CD4-positive, alpha-beta T cell (primary cell): ENCODE measurements at regions of chr2 and their contacts with region 1.

Region 1: GRCh38 chr2:105521205-105521604 is 122.4 kb upstream of the FHL2 start:
- DNase-seq: peak in 3 of 14 experiments; percentile 20 to 55 (median 47)
- ATAC-seq: no peak
- H3K4me3 ChIP-seq: no peak overlapping the region
- H3K4me3 Mint-ChIP-seq: no peak overlapping the region
- H3K27ac ChIP-seq: no peak overlapping the region
- H3K27ac Mint-ChIP-seq: no peak overlapping the region
- H3K4me1 ChIP-seq: no peaks in the 10 kb centered on the region
- H3K4me1 Mint-ChIP-seq: no peaks in the 10 kb centered on the region
- H3K27me3 ChIP-seq: no peaks in the 10 kb centered on the region
- H3K27me3 Mint-ChIP-seq: no peaks in the 10 kb centered on the region
- CTCF ChIP-seq: peak; percentile 81

Region 2: DNA sequence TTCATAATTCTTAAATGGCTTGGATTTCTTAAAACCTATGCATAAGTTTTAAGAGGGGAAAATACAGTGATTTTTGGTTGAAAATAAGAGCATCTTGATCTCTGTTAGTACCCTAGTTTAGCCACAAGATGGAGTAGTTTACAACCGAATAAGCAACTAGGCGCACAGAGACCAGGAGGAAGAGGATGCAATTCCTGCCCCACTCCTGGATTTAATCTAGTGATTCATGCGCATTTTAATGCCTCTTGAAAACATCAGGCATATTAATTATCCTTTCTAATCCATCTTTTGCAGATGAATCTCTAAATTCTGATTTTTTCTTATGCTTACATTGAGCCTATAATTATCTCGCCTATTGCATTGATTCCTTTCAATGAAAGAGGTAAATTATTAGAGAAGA is 406.7 kb before region 1 on chr2:
- CTCF ChIA-PET with region 1: no interaction called
- POLR2A ChIA-PET with region 1: no interaction called
- intact Hi-C with region 1: loop called in 1 of 2 experiments (anchors 5 kb)
- DNase-seq: peak in 3 of 14 experiments; percentile 43 to 56 (median 55)
- ATAC-seq: no peak
- H3K4me3 ChIP-seq: no peak overlapping the region
- H3K4me3 Mint-ChIP-seq: no peak overlapping the region
- H3K27ac ChIP-seq: no peak overlapping the region
- H3K27ac Mint-ChIP-seq: no peak overlapping the region
- H3K4me1 ChIP-seq: no peaks in the 10 kb centered on the region
- H3K4me1 Mint-ChIP-seq: no peaks in the 10 kb centered on the region
- H3K27me3 ChIP-seq: no peaks in the 10 kb centered on the region
- H3K27me3 Mint-ChIP-seq: no peaks in the 10 kb centered on the region
- CTCF ChIP-seq: peak; percentile 74

Region 3: GRCh38 chr2:105287692-105288091 is 233.5 kb before region 1 on chr2:
- CTCF ChIA-PET with region 1: no interaction called
- POLR2A ChIA-PET with region 1: no interaction called
- intact Hi-C with region 1: loop called in 1 of 2 experiments (anchors 10 kb)
- DNase-seq: peak in 7 of 14 experiments; percentile 11 to 58 (median 19)
- ATAC-seq: no peak
- H3K4me3 ChIP-seq: no peak overlapping the region
- H3K4me3 Mint-ChIP-seq: no peak overlapping the region
- H3K27ac ChIP-seq: no peak overlapping the region
- H3K27ac Mint-ChIP-seq: no peak overlapping the region
- H3K4me1 ChIP-seq: no peaks in the 10 kb centered on the region
- H3K4me1 Mint-ChIP-seq: no peaks in the 10 kb centered on the region
- H3K27me3 ChIP-seq: no peaks in the 10 kb centered on the region
- H3K27me3 Mint-ChIP-seq: no peaks in the 10 kb centered on the region
- CTCF ChIP-seq: peak; percentile 22

Region 4: GRCh38 chr2:105344704-105345345 is 176.4 kb before region 1 on chr2:
- CTCF ChIA-PET with region 1: interaction called, 4 read pairs
- POLR2A ChIA-PET with region 1: no interaction called
- intact Hi-C with region 1: loop called in 1 of 2 experiments (anchors 1 kb)
- DNase-seq: peak in 3 of 14 experiments; percentile 43 to 61 (median 53)
- ATAC-seq: peak; percentile 44
- H3K4me3 ChIP-seq: no peak overlapping the region
- H3K4me3 Mint-ChIP-seq: no peak overlapping the region
- H3K27ac ChIP-seq: no peak overlapping the region
- H3K27ac Mint-ChIP-seq: no peak overlapping the region
- H3K4me1 ChIP-seq: no peaks in the 10 kb centered on the region
- H3K4me1 Mint-ChIP-seq: peaks cover 20% of the 10 kb centered on the region
- H3K27me3 ChIP-seq: no peaks in the 10 kb centered on the region
- H3K27me3 Mint-ChIP-seq: no peaks in the 10 kb centered on the region
- CTCF ChIP-seq: peak; percentile 42